GM18951 (cell line): ENCODE measurements at regions of chr2 and their contacts with region 1.

Region 1: DNA sequence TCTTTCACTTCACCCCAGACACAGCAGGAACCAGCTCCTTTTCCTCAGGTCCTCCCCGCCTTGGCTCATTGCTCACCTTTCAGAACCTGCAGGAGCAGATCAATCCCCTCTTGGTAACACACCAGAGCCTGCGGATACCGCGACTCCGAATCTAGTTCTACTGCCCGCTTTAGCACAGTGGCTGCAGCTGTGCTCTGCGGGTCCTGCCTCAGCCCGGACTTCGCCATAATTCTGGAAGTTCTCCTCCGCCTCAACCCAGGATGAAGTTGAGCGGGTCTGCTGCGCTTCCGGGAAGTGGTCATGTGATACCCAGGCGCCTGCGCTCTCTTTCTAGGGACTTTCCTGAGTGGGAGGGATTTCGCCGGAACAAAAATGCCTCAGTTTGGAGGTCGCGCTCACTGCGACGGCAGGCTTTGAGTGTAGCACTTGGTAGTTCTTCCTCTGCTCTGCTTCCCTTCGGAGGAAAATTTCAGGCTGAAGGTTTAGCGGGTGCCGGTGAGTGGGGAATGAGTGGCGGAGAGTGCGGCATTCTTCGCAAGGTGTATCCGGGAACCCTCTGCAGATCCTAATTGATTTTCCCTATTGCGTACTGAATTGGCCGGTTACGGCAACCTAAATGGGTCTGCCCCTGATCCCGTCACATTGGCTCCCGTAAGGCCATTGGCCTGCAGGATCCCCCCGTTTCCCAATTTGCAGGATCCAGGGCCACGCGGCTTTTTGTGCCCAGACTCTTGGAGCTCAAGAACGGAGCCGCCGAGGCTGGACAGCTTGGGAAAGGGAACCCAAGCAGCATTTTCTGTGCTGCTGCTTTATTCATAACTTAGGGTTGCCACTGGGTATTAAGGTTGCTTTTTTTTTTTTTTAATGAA is at the starts of genes MITD1 and MRPL30:
- POLR2A ChIP-seq: peak; percentile 93

Region 2: GRCh38 chr2:99297994-99298393 is 117.0 kb after region 1 on chr2:
- in situ Hi-C with region 1: no loop called
- POLR2A ChIP-seq: no peak

Region 3: GRCh38 chr2:99489761-99490622 is 309.0 kb after region 1 on chr2 and contains the start of gene REV1:
- in situ Hi-C with region 1: loop called (anchors 25 kb)
- POLR2A ChIP-seq: peak; percentile 68